Posterior cingulate gyrus (tissue), 11 donors: ENCODE measurements at regions of chr16 and their contacts with region 1.

Region 1: GRCh38 chr16:67667817-67668494 is 1.3 kb downstream of the C16orf86 start:
- DNase-seq: peak; percentile 69 to 98 (median 88)

Region 2: DNA sequence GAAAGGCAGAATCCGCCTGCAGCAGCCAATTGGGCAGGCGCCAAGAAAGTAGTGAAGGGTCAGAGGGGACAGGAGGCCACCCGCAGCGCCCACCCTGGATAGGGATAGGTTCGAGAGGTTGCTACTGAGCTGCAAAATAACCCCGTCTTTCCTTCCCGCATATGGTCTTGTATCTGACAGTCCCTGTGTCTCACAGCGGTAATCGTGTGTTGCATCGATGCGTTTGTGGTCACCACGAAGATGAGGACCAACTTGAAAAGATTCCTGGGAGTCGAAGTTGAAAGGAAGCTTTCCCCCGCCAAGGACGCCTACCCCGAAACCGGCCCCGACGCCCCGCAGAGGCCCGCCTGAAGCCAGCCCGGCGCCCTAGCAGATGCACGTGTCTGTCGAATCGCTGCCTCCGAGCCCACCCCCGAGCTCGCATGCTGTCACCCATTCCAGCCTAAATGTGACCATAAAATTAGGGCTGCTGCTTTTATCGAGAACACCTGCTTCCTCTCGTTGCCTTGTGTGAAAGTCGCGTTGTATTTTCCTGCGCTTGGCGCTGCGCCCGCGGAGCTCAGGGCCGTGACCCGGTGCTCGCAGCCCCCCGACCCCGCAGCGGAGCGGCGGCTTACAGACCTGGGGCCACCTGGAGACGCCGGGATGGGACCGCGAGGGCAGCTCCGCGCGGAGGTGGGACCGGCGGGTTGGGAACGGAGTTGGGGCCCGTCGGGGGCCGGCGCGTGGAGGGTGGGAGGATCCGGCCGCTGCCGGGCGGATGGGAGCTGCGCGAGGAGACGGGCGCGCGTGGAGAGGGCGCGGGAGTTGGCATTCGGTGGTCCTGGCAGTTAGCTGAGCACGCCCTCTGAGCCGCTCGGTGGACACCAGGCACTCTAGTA is 1089.1 kb before region 1 on chr16 and contains the start of gene CMTM2:
- intact Hi-C with region 1: no loop called
- DNase-seq: peak in 1 of 10 donors; percentile 86

Region 3: GRCh38 chr16:67155295-67156142 is 512.4 kb before region 1 on chr16:
- intact Hi-C with region 1: no loop called
- DNase-seq: peak; percentile 69 to 97 (median 81)

Region 4: GRCh38 chr16:67521095-67521804 is 146.7 kb before region 1 on chr16:
- intact Hi-C with region 1: loop called (anchors 1 kb)
- DNase-seq: peak; percentile 86 to 99 (median 96)

Region 5: GRCh38 chr16:67542464-67543435 is 125.2 kb before region 1 on chr16:
- intact Hi-C with region 1: no loop called
- DNase-seq: peak in 2 of 10 donors; percentile 71 to 82

Region 6: DNA sequence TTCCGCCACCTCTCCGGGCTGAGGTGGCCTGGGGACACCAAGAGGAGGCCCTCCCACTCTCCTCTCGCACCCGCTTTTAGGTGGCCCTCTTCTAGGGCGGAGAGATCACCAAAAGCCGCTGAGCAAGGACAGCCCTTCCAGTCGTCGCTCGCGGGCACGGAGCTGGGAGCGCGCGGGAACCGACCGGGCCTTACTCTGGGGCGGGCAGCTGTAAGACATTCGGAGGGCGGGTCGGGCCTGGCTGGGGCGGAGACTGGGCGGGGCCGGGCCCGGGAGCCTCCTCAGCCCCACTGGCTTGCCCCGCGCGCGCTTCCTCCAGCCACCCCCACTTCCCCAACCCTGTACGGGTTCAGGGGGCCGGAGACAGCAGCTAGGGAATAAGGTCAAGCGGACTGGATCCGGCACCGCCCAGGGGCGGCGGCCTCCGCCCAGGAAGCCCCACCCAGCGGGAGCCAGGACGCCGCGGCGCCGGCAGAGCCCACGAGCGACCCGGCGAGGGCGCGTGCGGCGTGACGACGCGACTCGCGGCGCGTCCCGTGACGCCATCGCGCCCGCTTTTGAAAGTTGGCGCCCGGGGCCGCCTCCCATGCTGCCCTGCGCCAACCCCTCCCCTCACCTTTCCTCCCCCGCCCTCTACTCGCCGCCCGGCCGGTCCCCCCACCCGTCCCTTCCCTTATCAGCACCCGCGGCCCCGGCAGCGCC is 106.0 kb before region 1 on chr16:
- intact Hi-C with region 1: loop called (anchors 2 kb)
- DNase-seq: peak; percentile 77 to 98 (median 89)

Region 7: DNA sequence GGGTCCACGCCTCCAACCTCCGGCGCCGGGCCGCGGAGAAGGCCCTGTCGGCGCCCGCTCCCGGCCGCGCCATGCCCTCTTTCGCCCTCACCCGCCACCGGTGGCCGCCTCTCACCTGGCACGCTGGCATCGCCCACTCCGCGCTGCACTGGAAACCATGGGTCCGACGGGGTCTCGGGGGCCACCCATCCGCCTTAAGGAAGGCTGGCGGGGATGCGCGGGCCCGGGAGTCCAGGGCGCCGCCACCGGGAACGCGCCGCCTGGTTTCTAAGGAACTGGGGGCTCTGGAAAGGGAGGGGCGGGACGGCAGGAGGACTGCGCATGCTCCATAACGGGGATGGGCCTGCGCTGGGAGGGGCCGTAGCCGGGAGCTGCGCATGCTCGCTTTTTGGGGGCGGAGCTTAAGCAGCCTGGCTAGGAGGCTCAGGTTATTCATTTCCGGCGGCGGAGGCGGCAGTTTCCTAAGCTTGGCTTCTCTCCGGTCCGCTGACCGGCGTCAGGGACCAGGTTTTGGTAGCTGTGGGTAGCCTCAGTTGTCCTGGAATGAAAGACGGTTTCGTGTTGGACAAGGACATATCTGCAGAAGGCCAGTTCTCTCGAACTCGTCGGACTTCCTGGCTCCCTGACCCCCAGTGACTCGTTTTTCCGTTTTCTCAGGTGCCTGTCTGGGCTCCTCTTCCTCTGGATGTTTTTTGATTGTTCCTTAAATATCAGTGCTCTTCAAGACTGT is 51.3 kb after region 1 on chr16 and contains the start of gene GFOD2:
- intact Hi-C with region 1: loop called (anchors 5 kb)
- DNase-seq: peak; percentile 94 to 99 (median 98)

Region 8: GRCh38 chr16:67841764-67842508 is 174.0 kb after region 1 on chr16 and contains the start of gene THAP11:
- intact Hi-C with region 1: loop called (anchors 10 kb)
- DNase-seq: peak; percentile 86 to 99 (median 94)